GM10248 (cell line): ENCODE measurements at regions of chr14 and their contacts with region 1.

Region 1: GRCh38 chr14:91303091-91303923 is 58.8 kb upstream of the GPR68 start:
- DNase-seq: peak; percentile 92
- CTCF ChIP-seq: no peak

Region 2: DNA sequence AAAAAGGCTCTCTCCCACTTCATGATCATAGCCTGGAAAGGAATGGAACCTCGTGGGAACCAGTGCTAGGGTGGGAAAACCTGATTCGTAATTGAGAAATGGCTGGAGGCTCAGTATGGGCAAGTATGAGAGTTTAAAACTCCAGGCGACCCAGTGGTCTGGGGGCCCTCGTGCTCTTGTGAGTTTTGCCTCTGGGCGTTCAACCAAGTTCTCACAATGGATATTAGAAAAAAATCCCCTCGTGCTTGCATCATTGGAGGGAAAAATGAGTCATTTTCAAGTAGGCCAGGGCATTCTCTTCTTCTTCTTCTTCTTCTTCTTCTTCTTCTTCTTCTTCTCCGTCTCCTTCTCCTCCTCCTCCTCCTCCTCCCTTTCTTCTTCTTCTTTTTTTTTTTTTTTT is 97.8 kb before region 1 on chr14:
- CTCF ChIA-PET with region 1: no interaction called
- POLR2A ChIA-PET with region 1: no interaction called
- DNase-seq: no peak
- CTCF ChIP-seq: no peak

Region 3: DNA sequence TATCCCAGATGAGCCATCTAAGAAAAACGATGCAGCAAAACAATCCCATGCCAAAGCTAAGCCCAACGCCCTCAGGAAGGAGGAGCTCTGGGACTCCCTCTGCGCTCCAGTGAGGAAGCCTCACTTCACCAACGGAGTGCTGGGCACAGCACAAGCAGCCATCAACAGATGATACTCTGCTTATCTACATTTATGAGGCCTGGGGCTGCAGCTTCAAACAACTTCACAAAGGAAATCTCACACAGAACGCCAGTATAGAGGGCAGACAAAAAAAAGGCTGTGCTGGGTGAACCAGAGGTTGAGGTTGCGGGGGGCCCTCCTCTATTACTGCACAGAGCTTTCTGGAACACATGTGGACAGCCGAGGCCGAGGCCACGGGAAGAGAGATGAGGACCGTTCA is 24.0 kb before region 1 on chr14:
- CTCF ChIA-PET with region 1: no interaction called
- POLR2A ChIA-PET with region 1: no interaction called
- DNase-seq: no peak
- CTCF ChIP-seq: no peak

Region 4: GRCh38 chr14:91453744-91454143 is 150.4 kb after region 1 on chr14:
- CTCF ChIA-PET with region 1: no interaction called
- POLR2A ChIA-PET with region 1: interaction called, 10 read pairs
- DNase-seq: no peak
- CTCF ChIP-seq: no peak